ENCODE measurements at regions of chr15 and their contacts with region 1.

Region 1: DNA sequence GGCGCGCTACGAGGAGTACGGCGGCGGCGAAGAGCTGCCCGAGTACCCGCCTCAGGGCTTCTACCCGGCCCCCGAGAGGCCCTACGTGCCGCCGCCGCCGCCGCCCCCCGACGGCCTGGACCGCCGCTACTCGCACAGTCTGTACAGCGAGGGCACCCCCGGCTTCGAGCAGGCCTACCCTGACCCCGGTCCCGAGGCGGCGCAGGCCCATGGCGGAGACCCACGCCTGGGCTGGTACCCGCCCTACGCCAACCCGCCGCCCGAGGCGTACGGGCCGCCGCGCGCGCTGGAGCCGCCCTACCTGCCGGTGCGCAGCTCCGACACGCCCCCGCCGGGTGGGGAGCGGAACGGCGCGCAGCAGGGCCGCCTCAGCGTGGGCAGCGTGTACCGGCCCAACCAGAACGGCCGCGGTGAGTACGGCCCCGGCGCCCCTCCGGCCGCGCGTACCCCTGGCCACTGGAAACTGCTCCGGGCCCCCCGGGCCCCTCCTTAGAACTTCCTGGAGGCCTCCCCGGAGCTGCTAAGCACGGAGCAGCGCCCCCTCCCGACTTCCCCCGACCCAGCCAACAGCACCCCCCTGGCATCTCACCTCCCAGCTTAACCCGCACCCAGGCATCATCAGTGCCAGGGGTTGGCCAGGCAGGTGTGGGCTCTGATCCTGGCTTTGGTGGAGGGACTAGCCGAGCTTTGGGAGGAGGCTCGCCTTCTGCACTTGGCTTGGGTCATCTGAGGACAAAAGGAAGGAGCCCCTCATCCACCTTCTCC is 1.4 kb downstream of the LOXL1 start:
- DNase-seq: peak; percentile 82
- H3K4me3 Mint-ChIP-seq: peak overlapping the region; percentile 72
- H3K27ac Mint-ChIP-seq: peak overlapping the region; percentile 85
- H3K4me1 Mint-ChIP-seq: peaks cover 72% of the 10 kb centered on the region
- H3K27me3 Mint-ChIP-seq: no peaks in the 10 kb centered on the region

Region 2: GRCh38 chr15:73809733-73810501 is 117.7 kb before region 1 on chr15:
- CTCF ChIA-PET with region 1: no interaction called
- POLR2A ChIA-PET with region 1: no interaction called
- DNase-seq: no peak
- H3K4me3 Mint-ChIP-seq: no peak overlapping the region
- H3K27ac Mint-ChIP-seq: no peak overlapping the region
- H3K4me1 Mint-ChIP-seq: no peaks in the 10 kb centered on the region
- H3K27me3 Mint-ChIP-seq: peaks cover 10% of the 10 kb centered on the region

Region 3: GRCh38 chr15:73862276-73862675 is 65.4 kb before region 1 on chr15:
- CTCF ChIA-PET with region 1: no interaction called
- POLR2A ChIA-PET with region 1: no interaction called
- DNase-seq: no peak
- H3K4me3 Mint-ChIP-seq: no peak overlapping the region
- H3K27ac Mint-ChIP-seq: no peak overlapping the region
- H3K4me1 Mint-ChIP-seq: no peaks in the 10 kb centered on the region
- H3K27me3 Mint-ChIP-seq: peaks cover 50% of the 10 kb centered on the region

Region 4: GRCh38 chr15:73873889-73874511 is 53.7 kb before region 1 on chr15:
- CTCF ChIA-PET with region 1: interaction called, 27 read pairs
- POLR2A ChIA-PET with region 1: interaction called, 5 read pairs
- DNase-seq: peak; percentile 47
- H3K4me3 Mint-ChIP-seq: no peak overlapping the region
- H3K27ac Mint-ChIP-seq: no peak overlapping the region
- H3K4me1 Mint-ChIP-seq: no peaks in the 10 kb centered on the region
- H3K27me3 Mint-ChIP-seq: peaks cover 52% of the 10 kb centered on the region

Region 5: GRCh38 chr15:73885954-73886700 is 41.5 kb before region 1 on chr15:
- CTCF ChIA-PET with region 1: no interaction called
- POLR2A ChIA-PET with region 1: no interaction called
- DNase-seq: no peak
- H3K4me3 Mint-ChIP-seq: no peak overlapping the region
- H3K27ac Mint-ChIP-seq: no peak overlapping the region
- H3K4me1 Mint-ChIP-seq: no peaks in the 10 kb centered on the region
- H3K27me3 Mint-ChIP-seq: peaks cover 27% of the 10 kb centered on the region

Region 6: GRCh38 chr15:73908030-73908821 is 19.4 kb before region 1 on chr15:
- CTCF ChIA-PET with region 1: interaction called, 29 read pairs
- POLR2A ChIA-PET with region 1: interaction called, 20 read pairs
- DNase-seq: peak; percentile 83
- H3K4me3 Mint-ChIP-seq: no peak overlapping the region
- H3K27ac Mint-ChIP-seq: no peak overlapping the region
- H3K4me1 Mint-ChIP-seq: peaks cover 46% of the 10 kb centered on the region
- H3K27me3 Mint-ChIP-seq: no peaks in the 10 kb centered on the region

Region 7: GRCh38 chr15:73941871-73942635 is 14.4 kb after region 1 on chr15:
- CTCF ChIA-PET with region 1: interaction called, 19 read pairs
- POLR2A ChIA-PET with region 1: interaction called, 10 read pairs
- DNase-seq: peak; percentile 57
- H3K4me3 Mint-ChIP-seq: no peak overlapping the region
- H3K27ac Mint-ChIP-seq: peak overlapping the region; percentile 14
- H3K4me1 Mint-ChIP-seq: peaks cover 23% of the 10 kb centered on the region
- H3K27me3 Mint-ChIP-seq: no peaks in the 10 kb centered on the region

Region 8: GRCh38 chr15:73964736-73965093 is 37.1 kb after region 1 on chr15:
- CTCF ChIA-PET with region 1: interaction called, 26 read pairs
- POLR2A ChIA-PET with region 1: interaction called, 7 read pairs
- DNase-seq: peak; percentile 90
- H3K4me3 Mint-ChIP-seq: peak overlapping the region; percentile 56
- H3K27ac Mint-ChIP-seq: peak overlapping the region; percentile 60
- H3K4me1 Mint-ChIP-seq: peaks cover 38% of the 10 kb centered on the region
- H3K27me3 Mint-ChIP-seq: peaks cover 8% of the 10 kb centered on the region

Region 9: DNA sequence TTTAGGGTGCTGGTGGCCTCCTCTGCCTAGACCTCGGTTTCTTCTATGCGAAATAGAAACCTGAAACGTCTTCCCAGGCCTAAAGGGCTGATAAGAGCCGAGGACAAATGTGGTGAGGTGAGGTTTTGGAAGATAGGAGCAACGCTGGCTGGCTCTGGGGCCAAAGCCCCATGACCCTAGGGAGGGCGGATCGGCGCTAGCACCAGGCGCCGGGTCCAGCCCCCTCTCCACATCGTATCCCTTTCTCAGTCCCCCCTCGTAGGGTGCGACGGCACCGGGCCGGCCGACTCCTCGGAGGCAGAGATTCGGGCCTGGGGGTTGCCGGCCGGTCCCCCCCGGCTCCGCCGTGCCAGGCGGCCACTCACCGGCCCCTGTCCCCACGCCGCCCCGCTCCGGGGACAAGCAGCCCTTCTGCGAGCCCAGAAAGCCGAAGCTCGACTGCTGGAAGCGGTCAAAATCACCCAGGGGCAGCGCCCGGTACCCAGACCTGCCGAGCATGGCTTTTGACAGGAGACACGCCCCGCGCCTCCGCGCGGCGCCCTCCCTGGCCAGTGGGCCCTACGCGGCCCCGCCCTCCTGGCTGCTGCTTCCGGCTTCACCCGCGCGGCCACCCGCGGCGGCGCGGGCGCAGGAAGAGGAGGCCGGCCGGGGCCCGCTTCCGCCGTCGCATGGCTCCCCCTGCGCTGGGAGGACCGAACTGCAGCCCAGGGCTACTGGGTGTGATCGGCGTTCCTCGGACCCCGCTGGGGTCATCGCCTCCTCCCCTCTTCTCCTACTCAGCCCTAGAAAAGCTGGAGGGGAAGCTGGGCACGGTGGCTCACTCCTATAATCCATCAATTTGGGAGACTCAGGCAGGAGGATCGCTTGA is 64.3 kb after region 1 on chr15 and contains the start of gene STOML1:
- CTCF ChIA-PET with region 1: interaction called, 16 read pairs
- POLR2A ChIA-PET with region 1: interaction called, 6 read pairs
- DNase-seq: peak; percentile 95
- H3K4me3 Mint-ChIP-seq: peak within 1 kb of the TSS; percentile 76
- H3K27ac Mint-ChIP-seq: peak within 1 kb of the TSS; percentile 80
- H3K4me1 Mint-ChIP-seq: peaks cover 47% of the 10 kb centered on the region
- H3K27me3 Mint-ChIP-seq: no peaks in the 10 kb centered on the region
- total RNA-seq, gene STOML1: 7.1 to 8.5 TPM

Region 10: GRCh38 chr15:74044267-74045110 is 116.8 kb after region 1 on chr15:
- CTCF ChIA-PET with region 1: no interaction called
- POLR2A ChIA-PET with region 1: no interaction called
- DNase-seq: no peak
- H3K4me3 Mint-ChIP-seq: no peak overlapping the region
- H3K27ac Mint-ChIP-seq: no peak overlapping the region
- H3K4me1 Mint-ChIP-seq: peaks cover 12% of the 10 kb centered on the region
- H3K27me3 Mint-ChIP-seq: no peaks in the 10 kb centered on the region